PC-9 (cell line): ENCODE measurements at regions of chr9 and their contacts with region 1.

Region 1: GRCh38 chr9:4862506-4863250 is 69.9 kb downstream of the RCL1 start:
- DNase-seq: no peak
- H3K4me3 ChIP-seq: no peak overlapping the region
- H3K27ac ChIP-seq: no peak overlapping the region
- H3K4me1 ChIP-seq: no peaks in the 10 kb centered on the region
- H3K27me3 ChIP-seq: no peaks in the 10 kb centered on the region
- CTCF ChIP-seq: no peak

Region 2: GRCh38 chr9:4604678-4605095 is 258.0 kb before region 1 on chr9:
- CTCF ChIA-PET with region 1: no interaction called
- POLR2A ChIA-PET with region 1: no interaction called
- intact Hi-C with region 1: no loop called
- DNase-seq: peak; percentile 31 to 53
- H3K4me3 ChIP-seq: no peak overlapping the region
- H3K27ac ChIP-seq: no peak overlapping the region
- H3K4me1 ChIP-seq: no peaks in the 10 kb centered on the region
- H3K27me3 ChIP-seq: no peaks in the 10 kb centered on the region
- CTCF ChIP-seq: peak; percentile 73

Region 3: GRCh38 chr9:4755026-4755609 is 107.6 kb before region 1 on chr9:
- CTCF ChIA-PET with region 1: interaction called, 15 read pairs
- POLR2A ChIA-PET with region 1: no interaction called
- intact Hi-C with region 1: no loop called
- DNase-seq: no peak
- H3K4me3 ChIP-seq: no peak overlapping the region
- H3K27ac ChIP-seq: no peak overlapping the region
- H3K4me1 ChIP-seq: no peaks in the 10 kb centered on the region
- H3K27me3 ChIP-seq: no peaks in the 10 kb centered on the region
- CTCF ChIP-seq: no peak

Region 4: DNA sequence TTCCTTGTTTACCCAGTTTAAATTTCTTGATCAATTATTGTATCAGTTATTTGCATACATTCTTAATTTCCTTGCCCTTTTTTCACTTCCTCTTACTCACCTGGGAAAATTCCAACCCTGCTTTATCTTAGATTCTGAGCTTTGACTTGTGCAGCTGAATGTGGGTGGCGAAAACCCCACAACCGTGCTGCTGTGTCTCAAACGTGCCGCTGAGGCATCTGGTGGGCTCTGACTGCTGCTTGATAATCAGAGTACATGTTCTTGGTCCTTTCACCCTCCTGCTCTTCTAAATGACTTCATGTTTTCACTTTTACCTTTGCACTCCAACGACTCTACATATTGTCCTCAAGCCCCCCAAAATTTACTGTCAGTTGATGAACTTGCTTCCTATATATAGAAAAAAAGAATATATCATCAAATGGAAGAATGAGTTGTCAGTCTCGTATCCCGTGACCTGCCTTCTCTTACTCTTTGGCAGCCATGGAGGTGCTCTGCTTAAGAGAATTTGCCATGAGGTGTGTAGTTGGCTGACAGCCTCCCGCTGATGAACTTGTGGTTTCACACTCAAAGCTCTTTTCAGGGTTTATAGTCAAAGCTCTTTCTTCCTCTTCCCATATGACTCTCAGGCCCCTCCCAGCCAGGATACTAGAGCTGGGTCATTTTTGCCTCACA is 108.4 kb after region 1 on chr9:
- CTCF ChIA-PET with region 1: no interaction called
- POLR2A ChIA-PET with region 1: no interaction called
- intact Hi-C with region 1: no loop called
- DNase-seq: no peak
- H3K4me3 ChIP-seq: no peak overlapping the region
- H3K27ac ChIP-seq: no peak overlapping the region
- H3K4me1 ChIP-seq: no peaks in the 10 kb centered on the region
- H3K27me3 ChIP-seq: no peaks in the 10 kb centered on the region
- CTCF ChIP-seq: no peak